Activated naive CD4-positive, alpha-beta T cell treated with anti-CD3 and anti-CD28 coated beads for 36 hours (primary cell): ENCODE measurements at regions of chr7 and their contacts with region 1.

Region 1: DNA sequence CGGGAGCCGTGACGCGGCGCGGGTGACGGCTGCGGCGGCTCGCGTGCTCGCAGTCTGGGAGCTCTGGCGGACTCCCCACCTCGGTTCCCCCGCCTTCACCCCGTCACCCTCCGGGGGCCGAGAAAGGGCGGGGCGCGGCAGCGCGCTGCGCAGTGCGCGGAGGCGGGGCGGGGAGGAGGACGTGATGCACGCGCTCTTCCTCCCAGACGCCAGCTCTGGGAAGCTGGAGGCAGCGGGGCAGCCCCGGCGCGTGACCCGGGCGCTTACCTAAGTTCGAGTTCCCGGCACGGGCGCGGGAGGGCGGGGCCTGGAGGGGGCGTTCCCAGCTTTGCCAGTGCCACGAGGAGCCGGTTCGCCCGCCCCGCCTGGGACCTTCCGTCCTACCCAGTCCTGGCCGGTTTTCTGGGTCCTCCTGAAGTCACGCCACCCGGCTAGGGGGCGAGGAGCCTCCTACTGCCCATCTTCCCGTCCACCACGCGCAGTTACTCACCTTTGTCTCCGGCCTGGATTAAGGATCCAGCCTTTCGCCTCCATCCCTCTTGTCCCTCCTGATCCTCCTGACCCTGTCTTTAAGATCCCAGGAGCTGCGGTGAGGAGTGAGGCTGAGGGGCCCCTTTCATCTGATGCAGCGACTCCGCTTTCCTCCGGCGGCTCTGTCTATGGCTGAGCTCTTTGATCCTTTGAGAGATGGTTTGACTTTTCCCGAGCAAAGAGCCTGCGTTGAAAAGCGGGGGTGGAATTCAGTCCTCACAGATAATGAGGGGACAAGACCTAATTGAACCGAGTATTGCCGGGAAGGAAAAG is 470 bp upstream of the NAMPT start:
- DNase-seq: peak; percentile 100
- H3K4me3 Mint-ChIP-seq: peak overlapping the region; percentile 92
- H3K27ac Mint-ChIP-seq: peak overlapping the region; percentile 99
- H3K4me1 Mint-ChIP-seq: peaks cover 45% of the 10 kb centered on the region
- H3K27me3 Mint-ChIP-seq: peaks cover under 1% of the 10 kb centered on the region

Region 2: GRCh38 chr7:104943502-104944343 is 1341.5 kb before region 1 on chr7:
- CTCF ChIA-PET with region 1: no interaction called
- intact Hi-C with region 1: loop called (anchors 10 kb)
- DNase-seq: peak; percentile 82
- H3K4me3 Mint-ChIP-seq: peak overlapping the region; percentile 97
- H3K27ac Mint-ChIP-seq: peak overlapping the region; percentile 100
- H3K4me1 Mint-ChIP-seq: peaks cover 59% of the 10 kb centered on the region
- H3K27me3 Mint-ChIP-seq: no peaks in the 10 kb centered on the region

Region 3: GRCh38 chr7:106071356-106071998 is 213.8 kb before region 1 on chr7:
- CTCF ChIA-PET with region 1: no interaction called
- intact Hi-C with region 1: loop called (anchors 1 kb)
- DNase-seq: peak; percentile 78
- H3K4me3 Mint-ChIP-seq: peak overlapping the region; percentile 65
- H3K27ac Mint-ChIP-seq: peak overlapping the region; percentile 91
- H3K4me1 Mint-ChIP-seq: peaks cover 34% of the 10 kb centered on the region
- H3K27me3 Mint-ChIP-seq: no peaks in the 10 kb centered on the region

Region 4: GRCh38 chr7:106335814-106336213 is 50.6 kb after region 1 on chr7:
- CTCF ChIA-PET with region 1: no interaction called
- intact Hi-C with region 1: no loop called
- DNase-seq: no peak
- H3K4me3 Mint-ChIP-seq: no peak overlapping the region
- H3K27ac Mint-ChIP-seq: no peak overlapping the region
- H3K4me1 Mint-ChIP-seq: peaks cover 4% of the 10 kb centered on the region
- H3K27me3 Mint-ChIP-seq: peaks cover 15% of the 10 kb centered on the region

Region 5: GRCh38 chr7:106346678-106347217 is 61.5 kb after region 1 on chr7:
- CTCF ChIA-PET with region 1: interaction called, 3 read pairs
- intact Hi-C with region 1: loop called (anchors 1 kb)
- DNase-seq: peak; percentile 75
- H3K4me3 Mint-ChIP-seq: peak overlapping the region; percentile 15
- H3K27ac Mint-ChIP-seq: peak overlapping the region; percentile 97
- H3K4me1 Mint-ChIP-seq: peaks cover 55% of the 10 kb centered on the region
- H3K27me3 Mint-ChIP-seq: peaks cover 6% of the 10 kb centered on the region

Region 6: DNA sequence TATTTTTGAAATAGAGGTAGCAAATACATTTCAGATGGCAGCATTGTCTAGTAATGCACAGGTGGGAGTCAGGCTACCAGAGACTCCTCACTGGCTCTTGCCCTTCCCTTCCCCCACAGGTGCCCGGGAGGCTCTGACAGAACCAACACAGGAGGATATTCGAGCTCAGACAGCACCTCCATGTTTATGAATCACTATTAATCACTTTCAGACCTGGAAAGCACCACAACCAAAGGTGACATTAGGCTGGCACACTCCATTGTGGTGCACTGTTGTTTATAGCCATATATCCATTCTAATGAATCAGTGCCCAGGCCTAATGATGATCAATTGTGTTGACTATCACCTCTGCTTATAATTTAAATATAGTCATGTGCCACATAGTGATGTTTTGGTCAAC is 107.3 kb after region 1 on chr7:
- CTCF ChIA-PET with region 1: no interaction called
- intact Hi-C with region 1: no loop called
- DNase-seq: no peak
- H3K4me3 Mint-ChIP-seq: no peak overlapping the region
- H3K27ac Mint-ChIP-seq: no peak overlapping the region
- H3K4me1 Mint-ChIP-seq: peaks cover 5% of the 10 kb centered on the region
- H3K27me3 Mint-ChIP-seq: peaks cover 34% of the 10 kb centered on the region

Region 7: GRCh38 chr7:106461993-106462859 is 177.0 kb after region 1 on chr7:
- CTCF ChIA-PET with region 1: interaction called, 12 read pairs
- intact Hi-C with region 1: loop called (anchors 1 kb)
- DNase-seq: peak; percentile 29
- H3K4me3 Mint-ChIP-seq: no peak overlapping the region
- H3K27ac Mint-ChIP-seq: peak overlapping the region; percentile 50
- H3K4me1 Mint-ChIP-seq: peaks cover 29% of the 10 kb centered on the region
- H3K27me3 Mint-ChIP-seq: no peaks in the 10 kb centered on the region

Region 8: GRCh38 chr7:106767498-106768323 is 482.5 kb after region 1 on chr7:
- CTCF ChIA-PET with region 1: no interaction called
- intact Hi-C with region 1: loop called (anchors 1 kb)
- DNase-seq: peak; percentile 25
- H3K4me3 Mint-ChIP-seq: peak overlapping the region; percentile 20
- H3K27ac Mint-ChIP-seq: peak overlapping the region; percentile 13
- H3K4me1 Mint-ChIP-seq: peaks cover 43% of the 10 kb centered on the region
- H3K27me3 Mint-ChIP-seq: no peaks in the 10 kb centered on the region